A673 (cell line): ENCODE measurements at regions of chr22 and their contacts with region 1.

Region 1: GRCh38 chr22:44398856-44399837 is 86.4 kb upstream of the SHISAL1 start:
- DNase-seq: peak; percentile 33
- H3K4me3 ChIP-seq: no peak overlapping the region
- H3K27ac ChIP-seq: no peak overlapping the region
- H3K4me1 ChIP-seq: no peaks in the 10 kb centered on the region
- H3K27me3 ChIP-seq: no peaks in the 10 kb centered on the region
- CTCF ChIP-seq: no peak

Region 2: GRCh38 chr22:44289414-44290171 is 109.6 kb before region 1 on chr22:
- CTCF ChIA-PET with region 1: no interaction called
- POLR2A ChIA-PET with region 1: no interaction called
- intact Hi-C with region 1: no loop called
- DNase-seq: no peak
- H3K4me3 ChIP-seq: no peak overlapping the region
- H3K27ac ChIP-seq: peak overlapping the region; percentile 5
- H3K4me1 ChIP-seq: peaks cover 33% of the 10 kb centered on the region
- H3K27me3 ChIP-seq: no peaks in the 10 kb centered on the region
- CTCF ChIP-seq: no peak

Region 3: GRCh38 chr22:44337678-44338004 is 61.5 kb before region 1 on chr22:
- CTCF ChIA-PET with region 1: no interaction called
- POLR2A ChIA-PET with region 1: no interaction called
- intact Hi-C with region 1: loop called (anchors 2 kb)
- DNase-seq: peak; percentile 58
- H3K4me3 ChIP-seq: no peak overlapping the region
- H3K27ac ChIP-seq: no peak overlapping the region
- H3K4me1 ChIP-seq: no peaks in the 10 kb centered on the region
- H3K27me3 ChIP-seq: peaks cover 1% of the 10 kb centered on the region
- CTCF ChIP-seq: no peak

Region 4: GRCh38 chr22:44412136-44412731 is 13.1 kb after region 1 on chr22:
- CTCF ChIA-PET with region 1: interaction called, 20 read pairs
- POLR2A ChIA-PET with region 1: no interaction called
- intact Hi-C with region 1: no loop called
- DNase-seq: no peak
- H3K4me3 ChIP-seq: no peak overlapping the region
- H3K27ac ChIP-seq: no peak overlapping the region
- H3K4me1 ChIP-seq: no peaks in the 10 kb centered on the region
- H3K27me3 ChIP-seq: no peaks in the 10 kb centered on the region
- CTCF ChIP-seq: no peak